Activated CD4-positive, alpha-beta T cell treated with anti-CD3 and anti-CD28 coated beads for 36 hours (primary cell): ENCODE measurements at regions of chr5 and their contacts with region 1.

Region 1: DNA sequence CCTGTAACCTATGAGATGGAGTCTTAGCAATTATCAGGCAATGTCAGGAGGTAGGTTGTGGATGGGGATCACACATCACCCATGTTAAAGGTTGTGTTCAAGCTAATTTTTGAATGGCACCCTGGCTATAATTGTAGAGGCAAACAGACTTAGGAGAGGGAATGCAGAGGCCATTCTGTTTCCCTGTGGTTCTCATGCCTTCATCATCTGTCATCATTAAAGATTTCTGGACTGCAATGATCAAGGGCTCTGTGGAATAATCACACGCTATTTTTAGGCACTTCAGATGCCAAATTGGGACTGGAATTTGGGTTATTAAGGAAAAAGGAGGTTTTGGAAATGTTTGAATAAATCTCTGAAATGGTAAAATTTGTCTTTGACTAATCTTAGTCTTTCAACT is 1065.4 kb downstream of the TAF11L14 start:
- DNase-seq: no peak
- ATAC-seq: no peak
- H3K4me3 Mint-ChIP-seq: no peak overlapping the region
- H3K27ac Mint-ChIP-seq: no peak overlapping the region
- H3K4me1 Mint-ChIP-seq: peaks cover 21% of the 10 kb centered on the region
- H3K27me3 Mint-ChIP-seq: no peaks in the 10 kb centered on the region

Region 2: DNA sequence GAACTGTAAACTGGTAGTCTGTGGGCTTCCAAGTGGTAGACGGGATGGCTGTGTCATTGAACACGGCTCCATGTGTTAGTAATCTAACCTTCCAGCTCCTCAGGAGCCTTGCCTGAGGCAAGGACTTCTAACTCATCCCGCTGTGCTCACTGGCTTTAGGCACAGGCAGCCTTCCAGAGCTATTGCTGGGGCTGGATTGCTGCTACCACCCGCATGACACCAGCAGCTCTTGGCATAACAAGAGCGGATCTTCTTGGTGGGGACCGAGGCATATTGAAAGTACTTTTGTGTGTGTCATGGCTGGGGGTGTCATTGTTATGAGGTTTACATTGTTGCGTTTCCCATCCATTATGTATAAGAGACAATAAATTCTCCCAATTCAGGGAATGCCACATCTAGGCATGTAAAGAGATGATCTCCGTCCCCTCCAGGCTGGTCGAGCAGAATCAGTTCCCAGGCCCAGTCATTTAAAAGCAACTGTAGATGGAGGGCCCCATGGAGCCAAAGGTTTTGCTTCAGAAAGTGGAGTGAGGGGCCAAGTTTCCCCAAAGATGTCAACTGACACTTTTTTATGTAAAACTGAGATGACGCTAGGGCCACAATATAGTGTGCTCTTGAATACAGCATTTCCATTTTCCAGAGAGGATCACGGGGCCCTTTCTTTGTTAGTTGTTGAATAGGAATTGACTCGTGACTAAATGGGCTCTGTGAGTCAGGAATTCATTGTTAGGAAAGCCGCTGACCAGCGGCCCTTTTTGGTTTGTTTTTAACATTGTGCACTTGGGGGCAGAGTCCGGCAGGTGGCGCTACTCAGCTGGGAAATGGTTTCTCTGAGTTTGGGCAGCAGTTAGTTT is 305.9 kb before region 1 on chr5:
- CTCF ChIA-PET with region 1: no interaction called
- POLR2A ChIA-PET with region 1: no interaction called
- intact Hi-C with region 1: loop called (anchors 1 kb)
- DNase-seq: peak; percentile 70
- ATAC-seq: no peak
- H3K4me3 Mint-ChIP-seq: no peak overlapping the region
- H3K27ac Mint-ChIP-seq: no peak overlapping the region
- H3K4me1 Mint-ChIP-seq: no peaks in the 10 kb centered on the region
- H3K27me3 Mint-ChIP-seq: no peaks in the 10 kb centered on the region

Region 3: DNA sequence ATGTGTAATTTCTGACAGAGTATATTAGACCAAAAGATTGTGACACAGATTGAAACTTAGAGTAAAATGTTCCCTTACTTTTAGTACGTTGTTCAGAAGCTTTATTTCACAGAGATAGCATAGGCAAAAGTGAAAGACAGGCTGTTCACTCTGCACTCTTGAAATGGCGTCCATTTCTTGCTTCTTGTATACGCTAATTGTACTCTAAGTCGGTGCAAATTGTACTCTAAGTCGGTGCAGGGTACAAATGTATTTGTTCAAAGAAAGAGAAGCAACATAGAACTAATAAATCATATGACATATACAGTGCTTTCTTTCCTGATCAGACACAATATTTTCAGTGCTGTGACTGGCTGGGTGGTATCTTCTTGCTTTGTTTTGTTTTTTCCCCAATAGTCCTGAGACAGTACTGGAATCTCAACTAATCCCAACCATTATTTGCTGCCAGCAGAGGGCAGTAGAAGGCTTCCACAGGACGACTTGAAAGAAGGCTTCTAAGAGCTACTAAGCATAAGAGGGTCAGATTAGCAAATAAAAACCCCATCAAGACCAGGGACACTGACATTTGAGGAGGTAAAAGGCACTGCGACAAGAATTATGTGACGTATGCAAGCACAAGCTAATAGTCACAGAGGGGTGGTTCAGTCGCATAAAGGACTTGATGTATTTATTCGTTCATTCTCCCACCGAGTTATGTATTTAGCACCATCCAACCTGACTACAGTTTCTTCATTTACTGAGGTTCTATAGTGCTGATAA is 233.7 kb before region 1 on chr5:
- CTCF ChIA-PET with region 1: interaction called, 6 read pairs
- POLR2A ChIA-PET with region 1: no interaction called
- intact Hi-C with region 1: loop called (anchors 1 to 2 kb)
- DNase-seq: peak; percentile 66
- ATAC-seq: no peak
- H3K4me3 Mint-ChIP-seq: no peak overlapping the region
- H3K27ac Mint-ChIP-seq: no peak overlapping the region
- H3K4me1 Mint-ChIP-seq: no peaks in the 10 kb centered on the region
- H3K27me3 Mint-ChIP-seq: no peaks in the 10 kb centered on the region

Region 4: DNA sequence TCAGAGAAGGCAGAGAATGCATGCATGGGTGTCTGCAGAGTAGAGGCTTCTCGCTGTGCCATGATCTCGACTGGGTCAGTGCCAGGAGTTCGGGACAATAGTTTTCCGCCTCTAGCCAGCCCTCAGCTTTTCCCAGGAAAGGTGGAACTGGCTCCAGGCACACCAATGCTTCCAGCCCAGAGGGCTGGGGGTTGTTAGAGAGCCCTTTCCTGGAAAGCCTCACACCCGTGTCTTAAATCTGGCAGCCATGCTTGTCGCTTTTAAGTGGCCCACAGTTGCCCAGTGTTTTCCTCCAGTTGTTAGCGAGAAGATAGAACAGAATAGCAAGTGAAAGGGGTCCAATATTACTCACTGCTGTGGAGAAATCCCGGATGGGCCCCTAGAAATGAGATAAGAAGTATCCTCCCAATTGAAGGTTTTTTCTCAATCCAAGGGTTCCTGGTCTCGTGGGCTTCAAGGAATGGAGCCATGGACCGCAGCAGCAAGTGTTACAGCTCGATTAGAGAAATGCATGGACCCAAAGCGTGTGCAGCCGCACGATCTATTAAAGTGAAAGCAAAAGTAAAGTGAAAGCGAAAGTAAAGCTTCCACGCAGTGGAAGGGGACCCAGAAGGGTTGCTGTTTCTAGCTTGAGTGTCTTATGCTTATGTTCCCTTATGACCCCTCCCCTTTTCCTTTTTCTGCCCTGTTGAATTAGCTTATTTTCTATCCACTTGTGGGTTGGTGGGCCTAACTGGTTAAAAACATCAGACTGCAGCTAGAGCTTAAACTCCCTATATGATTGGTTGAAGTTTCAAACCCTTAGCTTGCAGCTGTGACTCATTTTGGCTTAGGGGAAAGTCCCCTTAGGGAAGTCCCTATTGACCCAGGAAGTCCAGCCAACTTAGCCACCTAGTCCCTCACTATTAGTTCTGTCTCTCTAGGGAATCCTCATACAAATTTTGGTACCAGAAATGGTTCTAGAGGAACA is 46.2 kb after region 1 on chr5:
- CTCF ChIA-PET with region 1: interaction called, 5 read pairs
- POLR2A ChIA-PET with region 1: no interaction called
- intact Hi-C with region 1: loop called (anchors 1 to 2 kb)
- DNase-seq: peak; percentile 55
- ATAC-seq: peak; percentile 78
- H3K4me3 Mint-ChIP-seq: peak overlapping the region; percentile 87
- H3K27ac Mint-ChIP-seq: peak overlapping the region; percentile 97
- H3K4me1 Mint-ChIP-seq: peaks cover 51% of the 10 kb centered on the region
- H3K27me3 Mint-ChIP-seq: no peaks in the 10 kb centered on the region

Region 5: GRCh38 chr5:18850216-18850615 is 150.5 kb after region 1 on chr5:
- CTCF ChIA-PET with region 1: no interaction called
- POLR2A ChIA-PET with region 1: no interaction called
- intact Hi-C with region 1: no loop called
- DNase-seq: no peak
- ATAC-seq: no peak
- H3K4me3 Mint-ChIP-seq: no peak overlapping the region
- H3K27ac Mint-ChIP-seq: no peak overlapping the region
- H3K4me1 Mint-ChIP-seq: peaks cover 2% of the 10 kb centered on the region
- H3K27me3 Mint-ChIP-seq: no peaks in the 10 kb centered on the region

Region 6: DNA sequence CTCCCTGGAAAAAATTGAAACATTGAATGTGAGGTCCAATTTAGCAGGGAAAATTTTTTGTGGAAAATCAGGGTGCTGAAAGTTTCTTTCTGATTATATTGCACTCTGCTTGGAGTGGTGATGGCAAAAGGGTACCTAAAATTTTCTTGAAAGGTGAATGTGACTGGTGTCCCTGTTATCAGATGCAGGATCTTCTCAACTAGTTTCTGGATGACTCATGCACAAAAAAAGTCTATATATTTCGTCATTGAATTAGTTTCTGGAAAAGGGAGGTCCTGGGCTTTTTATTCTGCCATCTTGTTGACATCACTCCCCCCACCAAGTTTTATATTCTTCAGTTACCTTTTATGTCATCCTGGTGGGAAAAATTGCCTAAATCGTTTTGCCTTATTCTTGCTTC is 492.5 kb after region 1 on chr5:
- CTCF ChIA-PET with region 1: no interaction called
- POLR2A ChIA-PET with region 1: no interaction called
- intact Hi-C with region 1: no loop called
- DNase-seq: no peak
- ATAC-seq: no peak
- H3K4me3 Mint-ChIP-seq: no peak overlapping the region
- H3K27ac Mint-ChIP-seq: no peak overlapping the region
- H3K4me1 Mint-ChIP-seq: no peaks in the 10 kb centered on the region
- H3K27me3 Mint-ChIP-seq: no peaks in the 10 kb centered on the region